IMR-90 (cell line): ENCODE measurements at regions of chr6 and their contacts with region 1.

Region 1: GRCh38 chr6:11700118-11700718 is 78.4 kb downstream of the ADTRP start:
- DNase-seq: peak; percentile 73
- ATAC-seq: peak; percentile 29; the same call in 1 of the 2 replicates
- H3K4me3 ChIP-seq: no peak overlapping the region
- H3K27ac ChIP-seq: no peak overlapping the region
- H3K4me1 ChIP-seq: peaks cover 6% of the 10 kb centered on the region; the same call in 1 of the 2 replicates
- H3K27me3 ChIP-seq: no peaks in the 10 kb centered on the region
- CTCF ChIP-seq: peak; percentile 64
- POLR2A ChIP-seq: no peak
- RAD21 ChIP-seq: peak; percentile 69

Region 2: GRCh38 chr6:11762794-11763459 is 62.7 kb after region 1 on chr6:
- CTCF ChIA-PET with region 1: no interaction called
- POLR2A ChIA-PET with region 1: no interaction called
- dilution Hi-C with region 1: no loop called
- in situ Hi-C with region 1: no loop called
- intact Hi-C with region 1: no loop called
- DNase-seq: no peak
- ATAC-seq: no peak
- H3K4me3 ChIP-seq: no peak overlapping the region
- H3K27ac ChIP-seq: no peak overlapping the region
- H3K4me1 ChIP-seq: peaks cover 11% of the 10 kb centered on the region
- H3K27me3 ChIP-seq: no peaks in the 10 kb centered on the region
- CTCF ChIP-seq: no peak
- POLR2A ChIP-seq: no peak
- RAD21 ChIP-seq: no peak

Region 3: DNA sequence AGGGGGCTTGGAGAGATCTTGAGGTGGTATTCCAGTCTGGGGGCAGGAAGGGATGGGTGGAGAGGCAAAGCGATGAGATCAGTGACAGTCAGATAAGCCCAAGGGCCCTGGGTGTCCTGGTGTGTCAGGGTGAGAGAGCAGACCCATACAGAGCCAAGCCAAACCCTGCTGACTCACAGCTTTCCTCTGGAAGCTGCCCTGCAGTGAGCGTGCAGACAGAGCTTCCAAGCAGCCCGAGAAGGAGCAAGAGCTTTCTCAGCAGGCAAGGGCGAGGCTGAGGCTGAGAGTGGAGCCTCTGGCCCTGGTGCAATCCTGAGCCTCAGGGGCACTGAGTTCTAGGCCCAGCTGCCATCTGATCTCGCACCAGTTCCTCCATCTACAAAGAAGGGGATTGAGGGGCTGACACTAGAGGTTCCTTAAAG is 220.8 kb after region 1 on chr6:
- CTCF ChIA-PET with region 1: no interaction called
- POLR2A ChIA-PET with region 1: no interaction called
- dilution Hi-C with region 1: no loop called
- in situ Hi-C with region 1: no loop called
- intact Hi-C with region 1: loop called (anchors 5 kb)
- DNase-seq: peak; percentile 95
- ATAC-seq: peak; percentile 96
- H3K4me3 ChIP-seq: no peak overlapping the region
- H3K27ac ChIP-seq: peak overlapping the region; percentile 59
- H3K4me1 ChIP-seq: peaks cover 18% of the 10 kb centered on the region
- H3K27me3 ChIP-seq: no peaks in the 10 kb centered on the region
- CTCF ChIP-seq: no peak
- POLR2A ChIP-seq: peak; percentile 76; the same call in 1 of the 2 replicates
- RAD21 ChIP-seq: peak; percentile 46

Region 4: GRCh38 chr6:12075067-12075563 is 374.9 kb after region 1 on chr6:
- CTCF ChIA-PET with region 1: no interaction called
- POLR2A ChIA-PET with region 1: no interaction called
- dilution Hi-C with region 1: no loop called
- in situ Hi-C with region 1: no loop called
- intact Hi-C with region 1: loop called (anchors 5 kb)
- DNase-seq: no peak
- ATAC-seq: peak; percentile 54
- H3K4me3 ChIP-seq: no peak overlapping the region
- H3K27ac ChIP-seq: no peak overlapping the region
- H3K4me1 ChIP-seq: no peaks in the 10 kb centered on the region
- H3K27me3 ChIP-seq: no peaks in the 10 kb centered on the region
- CTCF ChIP-seq: peak; percentile 53
- POLR2A ChIP-seq: no peak
- RAD21 ChIP-seq: peak; percentile 60